ENCODE measurements at regions of chr14 and their contacts with region 1.

Region 1: DNA sequence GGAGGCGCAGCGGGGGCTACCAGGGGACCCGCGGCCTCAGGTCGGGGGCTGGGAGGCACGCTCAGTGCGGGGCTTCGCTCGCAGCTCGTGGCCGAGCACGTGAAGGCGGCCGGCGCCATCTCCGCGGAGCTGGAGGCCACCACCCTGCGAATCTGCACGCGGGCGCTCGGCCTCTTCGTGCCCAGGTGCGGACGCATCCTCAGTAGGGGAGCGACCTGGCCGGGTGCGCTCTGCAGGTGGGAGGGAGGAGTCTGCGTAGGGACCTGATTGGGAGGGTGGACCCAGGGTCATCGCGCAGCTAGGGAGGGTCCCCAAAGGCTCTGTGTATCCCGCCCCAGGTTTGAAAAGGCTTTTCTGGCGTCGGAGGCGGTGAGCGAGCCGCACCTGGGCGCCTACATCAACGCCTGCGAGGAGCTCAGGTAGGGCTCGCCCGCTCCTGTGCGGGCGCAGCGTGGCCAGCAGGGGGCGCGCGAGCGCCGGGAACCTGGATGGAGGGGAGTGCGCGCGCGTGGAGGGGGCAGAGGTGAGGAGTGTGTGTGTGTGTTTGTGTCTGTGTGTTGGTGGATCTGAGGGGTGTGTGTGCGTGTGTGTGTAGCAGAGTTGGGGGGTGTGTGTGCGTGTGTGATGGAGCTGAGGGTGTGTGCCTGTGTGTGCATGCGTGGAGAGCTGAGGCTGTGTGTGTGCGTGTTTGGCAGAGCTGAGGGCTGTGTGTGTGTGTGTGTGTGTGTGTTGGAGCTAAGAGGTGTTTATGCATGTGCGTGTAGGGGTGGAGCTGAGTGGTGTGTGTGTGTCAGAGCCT is 10.3 kb downstream of the EXOC3L4 start:
- DNase-seq: no peak

Region 2: DNA sequence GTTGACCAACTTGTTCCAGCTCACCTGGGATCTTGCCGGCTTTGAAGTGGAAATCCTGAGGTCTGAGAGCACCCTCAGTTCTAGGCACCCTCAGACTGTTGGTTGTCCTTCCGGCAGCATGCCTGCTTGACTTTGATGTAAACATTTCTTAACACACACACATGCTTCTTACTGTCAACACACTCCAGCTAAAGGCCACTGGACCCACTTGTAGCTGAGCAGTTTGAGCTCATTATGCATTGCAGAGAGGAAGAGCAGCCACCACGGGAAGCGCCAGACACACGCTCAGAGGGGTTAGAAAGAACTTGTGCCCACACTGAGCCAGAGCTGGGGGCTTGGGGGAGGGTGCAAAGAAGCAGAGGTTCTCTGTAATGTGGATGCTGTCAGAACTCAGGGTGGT is 74.2 kb after region 1 on chr14:
- intact Hi-C with region 1: loop called in 1 of 2 experiments (anchors 5 kb)
- DNase-seq: no peak

Region 3: DNA sequence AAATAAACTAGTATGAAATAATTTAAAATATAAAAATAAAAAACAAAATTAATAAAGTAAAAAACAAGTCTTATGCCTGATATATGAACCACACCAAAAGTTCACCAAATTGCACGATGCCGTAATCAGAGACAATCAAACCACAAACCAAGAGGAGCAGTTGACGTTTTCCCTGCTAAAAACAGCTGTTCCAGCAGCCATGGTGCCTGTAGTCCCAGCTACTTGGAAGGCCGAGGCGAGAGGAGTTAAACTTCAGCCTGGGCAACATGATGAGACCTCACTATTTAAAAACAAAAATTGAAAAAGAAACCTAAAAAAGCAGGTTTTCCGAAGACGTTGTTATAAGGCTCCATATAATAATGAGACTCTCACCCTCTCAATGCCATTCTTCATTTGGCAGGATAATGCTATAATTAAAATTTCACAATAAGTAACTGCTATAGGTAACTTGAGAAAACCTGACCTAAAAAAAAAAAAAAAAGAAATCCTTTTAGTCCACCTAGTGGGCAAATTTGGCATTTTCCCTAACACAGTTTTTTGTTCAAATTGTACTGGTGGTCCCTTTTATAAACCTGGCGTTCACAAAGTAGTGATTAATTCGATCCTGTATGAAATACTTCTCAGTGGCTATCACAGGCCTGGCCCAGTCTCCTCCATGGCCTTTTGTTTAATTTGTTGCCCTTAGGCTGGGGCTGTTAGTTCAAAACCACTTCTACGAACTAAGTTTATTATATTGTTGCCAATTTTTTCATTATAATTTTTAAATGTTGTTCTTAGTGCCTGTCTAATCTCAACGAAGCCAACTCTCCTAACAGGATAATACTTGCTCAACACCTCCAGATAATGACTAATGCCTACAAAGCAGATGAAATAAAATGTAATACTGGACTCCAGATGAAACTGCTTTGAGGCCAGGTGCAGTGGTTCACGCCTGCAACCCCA is 80.5 kb after region 1 on chr14:
- intact Hi-C with region 1: loop called in 1 of 2 experiments (anchors 2 kb)
- DNase-seq: no peak

Measured in posterior vena cava (tissue), 2 donors.